PC-3 (cell line): ENCODE measurements at regions of chrX and their contacts with region 1.

Region 1: DNA sequence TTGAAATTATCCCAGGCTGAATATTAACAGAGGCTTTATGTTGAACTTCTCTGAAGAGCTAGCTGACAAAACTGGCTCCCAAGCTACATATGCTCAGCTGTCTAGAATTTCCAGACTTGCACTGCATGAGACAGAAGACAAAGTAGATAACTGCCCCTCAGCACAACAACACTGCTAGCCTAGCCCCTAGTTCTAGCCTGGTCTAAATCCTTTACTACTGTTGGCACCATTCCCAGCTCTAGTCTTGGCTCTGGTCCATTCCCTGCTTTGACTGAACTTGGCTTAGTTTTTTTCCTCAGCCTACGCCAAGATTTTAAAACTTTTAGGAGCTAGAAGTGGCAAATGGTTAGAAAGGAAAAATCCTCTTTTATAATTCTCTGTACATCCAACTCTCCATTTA is 7.6 kb upstream of the OPHN1 start:
- DNase-seq: peak; percentile 74
- ATAC-seq: peak; percentile 38
- H3K4me3 ChIP-seq: no peak overlapping the region
- H3K27ac ChIP-seq: no peak overlapping the region
- H3K4me1 ChIP-seq: peaks cover 17% of the 10 kb centered on the region
- H3K27me3 ChIP-seq: no peaks in the 10 kb centered on the region
- CTCF ChIP-seq: no peak

Region 2: DNA sequence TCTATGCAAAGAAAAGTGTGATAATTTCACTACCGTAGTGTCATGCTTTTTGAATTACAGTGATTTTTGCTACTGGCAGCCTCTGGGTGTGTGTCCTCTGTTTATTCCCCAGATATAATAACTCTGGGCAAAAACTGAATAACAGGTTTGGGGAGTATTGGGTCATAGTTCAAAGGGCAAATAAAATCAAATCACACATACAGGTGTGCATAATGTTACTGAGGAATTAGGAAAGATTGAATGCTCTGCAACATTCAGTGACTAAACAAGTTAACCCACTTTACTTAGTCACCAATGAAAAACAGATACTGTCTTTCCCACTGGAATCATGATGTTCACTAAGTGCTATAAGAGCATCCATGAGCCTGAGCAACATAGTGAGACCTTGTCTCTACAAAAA is 231.9 kb before region 1 on chrX:
- CTCF ChIA-PET with region 1: no interaction called
- POLR2A ChIA-PET with region 1: interaction called, 11 read pairs
- intact Hi-C with region 1: no loop called
- DNase-seq: no peak
- ATAC-seq: no peak
- H3K4me3 ChIP-seq: no peak overlapping the region
- H3K27ac ChIP-seq: no peak overlapping the region
- H3K4me1 ChIP-seq: no peaks in the 10 kb centered on the region
- H3K27me3 ChIP-seq: no peaks in the 10 kb centered on the region
- CTCF ChIP-seq: no peak